CD4-positive, alpha-beta T cell (primary cell): ENCODE measurements at regions of chr5 and their contacts with region 1.

Region 1: GRCh38 chr5:140564196-140565023 is at the starts of genes APBB3 and SLC35A4:
- DNase-seq: peak; percentile 92 to 100 (median 96)
- ATAC-seq: peak; percentile 87
- H3K4me3 ChIP-seq: peak within 1 kb of the TSS; percentile 98
- H3K4me3 Mint-ChIP-seq: peak within 1 kb of the TSS; percentile 94
- H3K27ac ChIP-seq: peak within 1 kb of the TSS; percentile 89 to 97
- H3K27ac Mint-ChIP-seq: peak within 1 kb of the TSS; percentile 94
- H3K4me1 ChIP-seq: peaks cover 70% of the 10 kb centered on the region
- H3K4me1 Mint-ChIP-seq: peaks cover 59% of the 10 kb centered on the region
- H3K27me3 ChIP-seq: no peaks in the 10 kb centered on the region
- H3K27me3 Mint-ChIP-seq: no peaks in the 10 kb centered on the region
- CTCF ChIP-seq: no peak
- total RNA-seq, gene APBB3: 56.6 to 61.5 TPM
- total RNA-seq, gene SLC35A4: 16.9 to 17.8 TPM

Region 2: GRCh38 chr5:140174465-140175366 is 389.7 kb before region 1 on chr5 and contains the start of gene CYSTM1:
- CTCF ChIA-PET with region 1: no interaction called
- POLR2A ChIA-PET with region 1: no interaction called
- intact Hi-C with region 1: loop called in 1 of 2 experiments (anchors 10 kb)
- DNase-seq: peak; percentile 90 to 99 (median 94)
- ATAC-seq: peak; percentile 91
- H3K4me3 ChIP-seq: peak within 1 kb of the TSS; percentile 66
- H3K4me3 Mint-ChIP-seq: peak within 1 kb of the TSS; percentile 95
- H3K27ac ChIP-seq: peak within 1 kb of the TSS; percentile 68 to 82
- H3K27ac Mint-ChIP-seq: peak within 1 kb of the TSS; percentile 96
- H3K4me1 ChIP-seq: peaks cover 17% of the 10 kb centered on the region
- H3K4me1 Mint-ChIP-seq: peaks cover 16% of the 10 kb centered on the region
- H3K27me3 ChIP-seq: no peaks in the 10 kb centered on the region
- H3K27me3 Mint-ChIP-seq: peaks cover 5% of the 10 kb centered on the region
- CTCF ChIP-seq: no peak
- total RNA-seq, gene CYSTM1: 7.2 to 7.4 TPM

Region 3: DNA sequence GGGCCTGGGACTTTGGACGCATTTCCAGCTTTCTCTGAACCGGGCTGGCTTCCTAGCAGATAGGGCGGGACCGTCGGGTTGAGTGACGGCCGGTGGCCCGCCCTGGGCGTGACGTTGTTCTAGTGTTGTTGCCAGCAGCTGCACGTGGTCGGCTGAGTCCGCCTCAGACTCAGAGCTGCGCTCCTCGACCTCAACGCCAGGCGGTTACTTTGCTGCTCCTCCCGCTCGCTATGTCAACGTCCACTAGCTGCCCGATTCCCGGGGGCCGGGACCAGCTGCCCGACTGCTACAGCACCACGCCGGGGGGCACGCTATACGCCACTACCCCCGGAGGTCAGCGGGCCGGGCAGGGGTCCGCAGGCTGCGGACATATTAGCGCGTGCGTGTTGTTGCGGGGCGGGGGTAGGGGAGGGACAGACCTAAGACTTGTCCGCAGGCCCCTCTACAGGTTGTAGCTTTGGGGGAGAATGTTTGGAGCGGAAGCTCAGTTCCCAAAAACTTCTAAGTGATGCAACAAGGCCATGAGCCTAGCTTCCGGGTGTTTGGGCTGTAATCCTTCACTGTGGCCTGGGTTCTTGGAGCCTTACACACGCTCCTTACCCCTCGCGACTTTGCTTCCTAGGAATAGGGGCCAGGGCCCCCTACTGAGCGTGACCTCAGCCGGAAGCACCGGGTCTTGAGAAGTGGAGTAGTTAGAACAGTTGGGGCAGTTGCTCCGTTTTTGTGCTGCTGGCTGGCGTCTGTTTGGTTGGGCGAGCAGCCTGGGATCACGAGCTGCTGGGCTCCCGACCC is 16.7 kb before region 1 on chr5 and contains the start of gene EIF4EBP3:
- CTCF ChIA-PET with region 1: interaction called, 10 read pairs
- POLR2A ChIA-PET with region 1: interaction called, 87 read pairs
- intact Hi-C with region 1: loop called (anchors 1 to 2 kb)
- DNase-seq: peak; percentile 79 to 95 (median 86)
- ATAC-seq: peak; percentile 97
- H3K4me3 ChIP-seq: peak within 1 kb of the TSS; percentile 79
- H3K4me3 Mint-ChIP-seq: peak within 1 kb of the TSS; percentile 96
- H3K27ac ChIP-seq: peak within 1 kb of the TSS; percentile 88 to 89
- H3K27ac Mint-ChIP-seq: peak within 1 kb of the TSS; percentile 96
- H3K4me1 ChIP-seq: peaks cover 31% of the 10 kb centered on the region
- H3K4me1 Mint-ChIP-seq: peaks cover 38% of the 10 kb centered on the region
- H3K27me3 ChIP-seq: no peaks in the 10 kb centered on the region
- H3K27me3 Mint-ChIP-seq: no peaks in the 10 kb centered on the region
- CTCF ChIP-seq: peak; percentile 72
- total RNA-seq, gene EIF4EBP3: 12.7 to 15.1 TPM

Region 4: GRCh38 chr5:140647042-140647341 is 82.6 kb after region 1 on chr5:
- CTCF ChIA-PET with region 1: no interaction called
- POLR2A ChIA-PET with region 1: interaction called, 18 read pairs
- intact Hi-C with region 1: no loop called
- DNase-seq: no peak
- ATAC-seq: no peak
- H3K4me3 ChIP-seq: peak overlapping the region; percentile 96
- H3K4me3 Mint-ChIP-seq: peak overlapping the region; percentile 98
- H3K27ac ChIP-seq: peak overlapping the region; percentile 96 to 98
- H3K27ac Mint-ChIP-seq: peak overlapping the region; percentile 96
- H3K4me1 ChIP-seq: peaks cover 36% of the 10 kb centered on the region
- H3K4me1 Mint-ChIP-seq: peaks cover 57% of the 10 kb centered on the region
- H3K27me3 ChIP-seq: no peaks in the 10 kb centered on the region
- H3K27me3 Mint-ChIP-seq: no peaks in the 10 kb centered on the region
- CTCF ChIP-seq: no peak

Region 5: GRCh38 chr5:140672455-140673186 is 108.2 kb after region 1 on chr5:
- CTCF ChIA-PET with region 1: no interaction called
- POLR2A ChIA-PET with region 1: no interaction called
- intact Hi-C with region 1: no loop called
- DNase-seq: peak in 4 of 14 experiments; percentile 13 to 46 (median 22)
- ATAC-seq: no peak
- H3K4me3 ChIP-seq: no peak overlapping the region
- H3K4me3 Mint-ChIP-seq: no peak overlapping the region
- H3K27ac ChIP-seq: no peak overlapping the region
- H3K27ac Mint-ChIP-seq: no peak overlapping the region
- H3K4me1 ChIP-seq: no peaks in the 10 kb centered on the region
- H3K4me1 Mint-ChIP-seq: peaks cover 6% of the 10 kb centered on the region
- H3K27me3 ChIP-seq: no peaks in the 10 kb centered on the region
- H3K27me3 Mint-ChIP-seq: no peaks in the 10 kb centered on the region
- CTCF ChIP-seq: no peak

Region 6: DNA sequence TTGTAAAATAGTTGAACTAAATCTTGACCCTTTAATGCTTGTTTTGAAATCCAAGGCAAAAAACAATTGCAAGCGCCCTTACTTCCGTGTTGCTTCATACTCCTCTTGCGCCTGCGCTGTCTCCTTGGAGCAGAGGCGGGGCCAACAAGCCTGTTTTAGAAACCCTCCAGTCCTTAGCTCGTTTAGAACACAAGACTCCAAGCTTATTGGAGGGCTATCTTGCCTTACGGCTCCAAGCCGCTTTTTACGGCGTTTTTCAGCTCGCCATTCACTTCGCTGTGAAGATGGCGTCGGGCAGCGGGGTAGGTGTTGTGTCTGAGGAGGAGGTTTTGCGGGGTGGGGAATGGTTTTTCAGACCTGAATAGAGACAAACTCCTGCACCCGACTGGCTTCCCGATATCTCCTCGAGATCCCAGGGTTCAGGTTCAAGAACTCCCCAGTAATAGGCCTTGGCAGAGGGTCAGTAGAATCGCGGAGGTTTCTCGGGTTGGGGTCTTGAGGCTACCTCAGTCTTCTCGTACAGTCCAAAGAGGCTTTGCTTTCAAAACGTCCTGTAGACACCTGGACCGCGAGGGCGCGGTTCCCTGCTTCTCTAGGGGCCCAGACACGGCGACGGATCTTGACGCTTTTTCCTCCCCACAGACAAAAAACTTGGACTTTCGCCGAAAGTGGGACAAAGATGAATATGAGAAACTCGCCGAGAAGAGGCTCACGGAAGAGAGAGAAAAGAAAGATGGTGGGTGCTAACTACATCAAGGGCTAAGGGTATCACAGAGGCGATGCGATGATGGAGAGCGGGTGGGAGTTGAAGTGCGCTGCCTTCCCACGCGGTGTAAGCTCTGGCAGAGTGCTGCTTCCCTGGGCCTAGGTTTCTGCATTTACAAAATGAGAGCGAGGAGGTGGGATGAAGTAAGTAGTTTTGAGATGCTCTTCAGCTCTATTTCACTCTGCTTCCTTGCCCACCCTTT is 136.1 kb after region 1 on chr5 and contains the start of gene ZMAT2:
- CTCF ChIA-PET with region 1: no interaction called
- POLR2A ChIA-PET with region 1: interaction called, 3 read pairs
- intact Hi-C with region 1: loop called in 1 of 2 experiments (anchors 5 kb)
- DNase-seq: peak; percentile 84 to 98 (median 90)
- ATAC-seq: peak; percentile 98
- H3K4me3 ChIP-seq: peak within 1 kb of the TSS; percentile 96
- H3K4me3 Mint-ChIP-seq: peak within 1 kb of the TSS; percentile 96
- H3K27ac ChIP-seq: peak within 1 kb of the TSS; percentile 64 to 90
- H3K27ac Mint-ChIP-seq: peak within 1 kb of the TSS; percentile 85
- H3K4me1 ChIP-seq: peaks cover 13% of the 10 kb centered on the region
- H3K4me1 Mint-ChIP-seq: peaks cover 31% of the 10 kb centered on the region
- H3K27me3 ChIP-seq: no peaks in the 10 kb centered on the region
- H3K27me3 Mint-ChIP-seq: no peaks in the 10 kb centered on the region
- CTCF ChIP-seq: no peak
- total RNA-seq, gene ZMAT2: 29.0 to 32.3 TPM